ENCODE measurements at regions of chr11 and their contacts with region 1.

Region 1: DNA sequence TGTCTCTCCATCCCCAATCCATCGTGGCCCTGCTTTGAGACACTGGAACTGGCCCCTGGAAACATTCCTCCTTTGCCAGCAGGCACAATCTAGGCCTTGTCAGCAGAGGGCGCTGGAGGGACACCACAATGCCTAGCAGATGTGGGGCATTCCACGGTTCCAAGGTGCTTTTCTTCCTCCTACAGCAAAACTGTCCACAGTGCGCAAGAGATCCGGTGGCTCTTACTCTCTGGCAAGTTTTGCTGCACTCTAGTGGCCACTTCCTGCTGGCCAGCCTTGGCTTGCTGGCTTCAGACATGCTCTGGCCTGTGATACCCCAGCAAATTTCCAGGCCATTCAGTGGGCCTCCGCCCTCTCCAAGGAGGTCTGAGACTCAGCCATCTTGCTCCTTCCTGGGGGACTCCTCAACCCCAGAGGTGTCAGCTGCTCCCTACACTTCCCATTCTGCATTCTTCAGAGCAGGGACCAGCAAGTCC is 17.1 kb upstream of the RBM4B start:
- DNase-seq: peak; percentile 69
- H3K4me3 Mint-ChIP-seq: no peak overlapping the region
- H3K27ac Mint-ChIP-seq: no peak overlapping the region
- H3K4me1 Mint-ChIP-seq: no peaks in the 10 kb centered on the region
- H3K27me3 Mint-ChIP-seq: no peaks in the 10 kb centered on the region

Region 2: GRCh38 chr11:66523462-66524010 is 171.2 kb before region 1 on chr11:
- intact Hi-C with region 1: no loop called
- DNase-seq: no peak
- H3K4me3 Mint-ChIP-seq: no peak overlapping the region
- H3K27ac Mint-ChIP-seq: no peak overlapping the region
- H3K4me1 Mint-ChIP-seq: no peaks in the 10 kb centered on the region
- H3K27me3 Mint-ChIP-seq: no peaks in the 10 kb centered on the region

Region 3: DNA sequence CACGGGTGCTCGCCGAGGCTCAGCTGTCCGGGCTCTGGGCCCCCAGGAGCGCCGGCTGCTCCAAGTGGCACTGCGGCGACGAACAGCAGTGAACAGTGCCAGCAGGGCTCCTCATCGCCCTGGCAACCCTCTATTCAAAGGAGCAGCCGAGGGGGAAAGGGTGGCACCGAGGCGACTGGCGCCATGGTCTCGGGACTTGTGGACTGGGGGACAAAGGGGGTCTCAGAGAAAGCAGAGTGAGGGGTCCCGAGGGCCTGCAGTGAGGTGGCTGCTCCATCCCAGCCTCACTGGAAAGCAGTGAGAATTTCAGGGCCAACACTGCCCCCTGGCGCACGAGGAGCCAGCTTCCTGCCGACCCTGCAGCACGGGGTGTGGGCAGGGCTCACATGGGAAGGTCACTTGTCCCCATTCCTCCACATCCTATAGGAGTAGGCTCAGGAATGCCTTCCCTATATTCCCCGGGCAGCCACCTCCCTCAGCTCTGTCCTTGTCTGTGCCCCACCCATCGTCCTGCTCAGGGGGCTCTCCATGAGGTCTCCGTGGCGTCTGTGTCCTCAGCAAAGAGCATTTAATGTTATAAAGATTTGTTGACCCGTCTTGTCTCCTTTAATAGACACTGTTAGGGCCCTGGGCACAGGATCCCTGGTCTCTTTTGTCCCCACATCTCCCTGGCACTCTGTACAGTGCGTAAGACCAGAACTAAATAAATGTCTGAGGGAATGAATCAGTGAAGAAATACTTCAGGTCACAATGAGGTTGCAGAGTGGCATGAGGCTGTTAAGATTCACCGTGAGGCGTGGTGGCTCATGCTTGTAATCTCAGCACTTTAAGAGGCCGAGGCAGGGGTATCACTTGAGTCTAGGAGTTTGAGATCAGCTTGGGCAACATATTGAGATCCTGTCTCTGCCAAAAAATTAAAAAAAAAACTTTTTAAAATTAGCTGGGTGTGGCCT is 188.5 kb after region 1 on chr11:
- intact Hi-C with region 1: loop called (anchors 2 kb)
- DNase-seq: peak; percentile 42
- H3K4me3 Mint-ChIP-seq: no peak overlapping the region
- H3K27ac Mint-ChIP-seq: no peak overlapping the region
- H3K4me1 Mint-ChIP-seq: peaks cover 7% of the 10 kb centered on the region
- H3K27me3 Mint-ChIP-seq: no peaks in the 10 kb centered on the region

Measured in activated T-helper 2 cell treated with anti-CD3 and anti-CD28 coated beads, Interferon-gamma antibody, Interleukin-2, Interleukin-4, amounts not matched to agents 10 μg/mL and 5 μg/mL and 100 μg/mL, durations not matched to agents 14 hours and 24 hours and 36 hours (primary cell).